ENCODE measurements at regions of chr3 and their contacts with region 1.

Region 1: DNA sequence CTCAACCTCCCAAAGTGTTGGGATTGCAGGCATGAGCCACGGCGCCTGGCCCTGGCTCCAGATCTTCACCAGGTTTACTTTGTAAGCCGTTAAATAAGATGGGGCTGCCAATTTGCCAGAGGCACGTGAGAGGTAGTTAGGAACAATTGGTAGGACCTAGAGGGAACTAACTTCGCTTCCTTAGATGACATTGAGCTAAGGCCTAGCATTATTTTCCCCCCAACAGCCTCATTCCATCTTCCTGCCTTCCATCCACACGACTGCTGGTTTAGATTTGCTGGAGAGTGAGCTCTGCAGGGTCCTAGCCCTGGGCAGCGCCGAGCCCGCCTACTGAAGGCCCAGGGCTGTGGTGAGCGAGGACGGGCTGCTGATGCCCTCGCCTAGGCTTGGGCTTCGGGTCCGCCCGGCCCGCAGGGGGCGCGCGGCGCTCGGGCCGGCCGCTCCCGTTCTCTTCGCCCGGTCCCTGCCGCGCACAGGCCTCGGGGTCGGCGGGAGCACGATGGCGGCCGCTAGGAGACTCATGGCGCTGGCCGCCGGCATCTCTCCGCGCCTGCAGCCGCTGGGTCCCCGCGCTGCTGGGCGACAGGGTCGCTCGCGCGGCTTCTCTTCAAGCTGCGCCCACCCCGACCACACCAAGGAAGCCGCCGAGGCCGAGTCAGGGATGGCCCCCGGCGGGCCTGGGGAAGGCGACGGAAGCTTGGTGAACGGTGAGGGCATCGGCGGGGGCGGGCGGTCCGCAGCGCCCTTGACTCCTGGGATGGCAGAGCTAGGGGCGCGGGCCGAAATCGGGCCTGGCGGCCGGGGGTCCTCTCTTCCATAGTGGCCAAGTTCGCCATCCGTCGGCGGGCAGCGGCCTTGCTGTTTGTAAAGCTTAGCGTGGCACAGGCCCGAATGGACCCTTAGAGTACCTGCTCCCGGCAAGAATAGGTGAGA is 21.9 kb downstream of the DHX30 start:
- DNase-seq: peak; percentile 62 to 97 (median 78)

Region 2: DNA sequence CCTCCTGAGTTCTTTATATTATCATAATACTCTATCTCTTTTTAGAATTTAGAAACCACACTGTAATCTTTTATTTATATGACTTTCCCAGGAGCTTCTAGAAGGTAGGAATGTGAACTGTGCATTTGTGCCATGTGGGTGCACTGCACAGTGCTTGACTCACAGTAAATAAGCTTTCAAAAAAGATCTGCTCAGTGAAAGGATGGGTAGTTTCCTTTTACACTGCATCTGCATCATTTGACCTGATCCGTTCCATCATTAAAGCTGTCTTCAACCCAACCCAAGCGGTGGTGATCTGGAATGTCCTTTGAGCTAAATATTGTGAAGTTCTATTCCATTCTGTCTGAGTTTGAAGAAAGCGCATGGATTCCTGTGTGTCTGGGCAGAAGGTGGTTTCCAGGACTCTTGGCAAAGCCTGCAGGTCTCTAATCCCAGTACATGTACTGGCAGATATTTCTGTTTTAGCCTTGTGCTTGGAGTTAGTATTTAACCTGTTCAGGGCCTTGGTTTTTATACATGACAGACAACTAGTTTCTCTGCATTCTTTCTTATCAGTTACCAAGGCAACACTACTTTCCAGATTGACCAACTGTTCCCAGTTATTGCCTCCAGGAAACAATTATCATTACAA is 74.8 kb after region 1 on chr3:
- intact Hi-C with region 1: no loop called
- DNase-seq: no peak

Region 3: GRCh38 chr3:48151058-48151806 is 326.4 kb after region 1 on chr3:
- intact Hi-C with region 1: loop called (anchors 5 kb)
- DNase-seq: peak; percentile 53 to 96 (median 74)

Measured in posterior cingulate gyrus (tissue), 11 donors.